Head of caudate nucleus (tissue), 42 donors: ENCODE measurements at regions of chr10 and their contacts with region 1.

Region 1: DNA sequence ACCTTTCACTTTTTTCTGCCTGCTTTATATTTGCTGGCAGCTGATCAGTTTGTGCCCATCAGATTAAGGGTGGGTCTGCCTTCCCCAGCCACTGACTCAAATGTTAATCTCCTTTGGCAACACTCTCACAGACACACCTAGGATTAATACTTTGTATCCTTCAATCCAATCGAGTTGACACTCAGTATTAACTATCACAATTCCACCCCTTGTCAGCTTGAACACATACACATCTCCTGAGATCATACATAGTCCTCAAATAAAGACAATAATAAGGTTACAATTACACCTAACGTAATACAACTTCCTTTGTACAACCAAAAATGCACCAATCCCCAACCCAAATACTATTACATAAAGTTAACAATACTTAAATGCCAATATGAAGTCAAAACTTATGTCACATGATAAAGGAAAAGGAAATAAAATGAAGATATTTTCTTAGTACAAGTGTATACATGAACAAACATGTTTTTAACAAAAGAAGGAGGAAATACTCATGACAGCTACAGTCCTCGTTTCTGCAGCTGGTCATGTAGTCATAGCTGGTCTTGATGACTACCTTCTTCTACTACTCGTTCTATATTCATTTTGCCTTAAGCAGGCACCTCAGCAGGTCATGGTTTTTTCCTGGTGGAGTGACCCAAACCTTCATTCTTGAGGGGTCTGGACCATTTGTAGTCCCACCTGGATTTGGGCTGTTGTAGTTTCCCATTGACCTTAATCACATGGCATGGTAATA is 96.7 kb upstream of the CABCOCO1 start:
- DNase-seq: no peak

Region 2: DNA sequence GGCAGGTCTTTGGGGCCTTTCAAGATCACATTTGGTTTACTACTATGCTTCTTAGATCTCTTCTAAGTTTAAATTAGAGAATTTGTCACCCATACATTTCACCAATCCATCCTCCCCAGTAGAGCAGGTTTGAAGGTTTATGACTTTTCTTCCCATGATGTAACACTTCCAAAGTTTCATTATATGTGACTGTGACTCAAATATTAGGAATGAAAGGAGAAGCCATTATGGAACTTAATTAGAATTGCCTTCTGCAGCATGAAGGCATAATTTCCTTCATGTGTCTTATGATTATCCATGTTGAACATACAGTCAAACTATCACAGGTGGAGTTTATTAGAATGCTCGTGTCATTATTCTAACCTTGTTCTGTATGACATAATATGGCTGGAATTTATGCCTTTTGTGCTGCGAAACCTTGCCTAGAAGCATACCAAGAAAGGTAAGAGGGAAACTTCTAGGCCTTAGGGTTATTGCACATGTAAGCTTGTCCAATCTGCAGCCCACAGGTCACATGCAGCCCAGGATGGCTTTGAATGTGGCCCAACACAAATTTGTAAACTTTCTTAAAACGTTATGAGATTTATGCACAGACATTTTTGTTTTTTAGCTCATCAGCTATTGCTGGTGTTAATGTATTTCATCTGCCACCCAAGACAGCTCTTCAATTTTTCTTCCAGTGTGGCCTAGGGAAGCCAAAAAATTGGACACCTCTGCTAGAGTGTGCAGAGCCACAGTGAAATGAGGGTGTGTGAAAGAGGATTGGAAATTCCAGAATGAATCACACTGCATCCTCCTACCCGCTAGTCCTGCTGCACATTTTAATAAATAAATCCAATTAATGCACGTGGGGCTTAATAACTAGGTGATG is 246.4 kb before region 1 on chr10:
- intact Hi-C with region 1: loop called (anchors 5 kb)
- DNase-seq: no peak

Region 3: DNA sequence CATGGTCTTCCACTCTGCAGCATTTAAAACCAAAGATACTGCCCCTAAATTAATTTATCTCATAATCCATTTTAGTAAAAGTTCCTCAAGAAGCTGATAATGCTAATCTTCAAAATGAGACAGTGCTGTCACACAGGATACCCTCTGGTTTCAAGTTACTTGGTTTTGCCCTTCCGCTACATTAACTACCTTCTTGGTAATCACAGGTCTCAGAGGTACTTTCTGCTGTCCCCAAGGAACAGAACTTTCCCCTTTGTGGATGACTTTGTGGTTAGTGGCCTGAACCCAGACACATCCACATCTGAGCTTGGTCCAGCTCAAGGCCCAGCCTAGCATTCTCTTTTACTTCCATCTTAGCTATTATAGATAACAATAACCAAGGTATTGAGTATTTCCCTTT is 24.0 kb before region 1 on chr10:
- intact Hi-C with region 1: no loop called
- DNase-seq: no peak

Region 4: DNA sequence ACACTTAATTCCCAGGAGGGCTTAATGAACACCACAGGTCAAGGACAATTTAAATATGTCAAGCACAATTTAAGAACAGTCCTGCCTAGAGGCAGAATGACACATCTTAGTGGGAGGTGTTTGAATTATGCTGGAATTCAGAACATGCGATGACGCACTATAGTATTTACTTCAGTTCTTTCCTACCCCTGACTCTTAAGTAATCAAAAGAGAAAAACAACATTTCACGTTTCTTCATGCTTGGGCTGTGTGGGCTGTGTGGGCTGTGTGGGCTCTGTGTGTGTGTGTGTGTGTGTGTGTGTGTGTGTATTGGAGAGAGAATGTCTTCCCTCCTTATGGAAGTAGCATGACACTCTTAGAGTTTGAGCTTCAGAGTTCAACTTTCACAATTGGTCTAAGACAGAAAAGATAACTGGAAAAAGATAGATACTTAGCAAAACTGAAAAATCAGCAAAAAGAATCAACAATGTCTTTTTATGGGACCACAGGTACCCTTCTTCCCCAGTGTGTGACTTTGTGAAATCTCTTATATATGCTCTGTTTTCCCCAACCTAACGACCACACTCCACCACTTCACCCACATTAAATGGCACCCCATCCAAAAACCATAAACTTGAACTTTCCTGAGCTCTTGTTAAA is 63.0 kb after region 1 on chr10:
- intact Hi-C with region 1: no loop called
- DNase-seq: peak in 9 of 42 donors; percentile 4 to 39 (median 18)